Ascending aorta (tissue), 2 donors: ENCODE measurements at regions of chr1 and their contacts with region 1.

Region 1: GRCh38 chr1:6359216-6360116 is 34.1 kb downstream of the ACOT7 start:
- DNase-seq: peak; percentile 46 to 79
- H3K4me3 ChIP-seq: peak overlapping the region in 1 of 2 donors; percentile 28
- H3K27ac ChIP-seq: peak overlapping the region; percentile 81 to 83
- H3K4me1 ChIP-seq: peaks cover 14 to 23% of the 10 kb centered on the region in 2 donors
- H3K27me3 ChIP-seq: no peaks in the 10 kb centered on the region
- CTCF ChIP-seq: no peak

Region 2: DNA sequence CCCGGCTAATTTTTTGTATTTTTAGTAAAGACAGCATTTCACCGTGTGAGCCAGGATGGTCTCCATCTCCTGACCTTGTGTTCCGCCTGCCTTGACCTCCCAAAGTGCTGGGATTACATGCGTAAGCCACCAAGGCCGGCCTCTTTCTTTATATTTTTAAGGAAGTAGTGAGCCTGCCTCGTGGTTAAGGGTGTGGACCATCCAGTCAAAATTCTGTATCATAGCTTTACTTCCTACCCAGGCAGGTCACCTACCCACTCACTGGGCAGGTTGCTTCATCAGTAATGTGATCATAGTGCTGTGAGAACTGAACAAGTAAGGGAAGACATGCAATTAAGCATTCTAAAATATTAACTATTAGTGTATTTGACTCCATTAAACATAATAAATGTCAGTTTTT is 42.2 kb after region 1 on chr1:
- intact Hi-C with region 1: loop called (anchors 1 kb)
- DNase-seq: no peak
- H3K4me3 ChIP-seq: no peak overlapping the region
- H3K27ac ChIP-seq: no peak overlapping the region
- H3K4me1 ChIP-seq: no peaks in the 10 kb centered on the region
- H3K27me3 ChIP-seq: no peaks in the 10 kb centered on the region
- CTCF ChIP-seq: no peak

Region 3: DNA sequence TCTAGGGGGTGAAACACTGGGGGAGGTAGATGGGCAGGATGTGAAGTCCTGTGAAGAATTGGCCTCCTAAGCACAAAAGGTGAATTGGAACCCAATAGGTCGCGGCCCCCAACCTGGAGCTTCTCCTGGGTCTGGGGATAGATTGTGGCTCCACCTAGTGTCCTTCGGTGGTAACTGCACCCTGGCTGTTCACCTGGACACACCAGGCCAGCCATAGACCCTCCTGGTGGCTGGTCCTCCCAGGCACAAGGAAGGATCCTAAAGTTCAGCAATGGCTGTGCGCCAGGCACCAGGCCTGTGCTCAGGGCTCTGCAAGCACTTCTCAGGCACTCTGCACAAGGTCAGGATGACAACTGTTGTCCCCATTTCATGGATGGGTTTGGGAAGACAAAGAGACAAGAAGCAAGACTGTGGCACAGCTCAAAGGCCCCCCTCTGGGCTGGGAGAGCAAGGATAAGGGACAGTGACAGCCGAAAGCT is 78.6 kb after region 1 on chr1:
- intact Hi-C with region 1: loop called (anchors 1 kb)
- DNase-seq: peak in 1 of 2 donors; percentile 73
- H3K4me3 ChIP-seq: no peak overlapping the region
- H3K27ac ChIP-seq: no peak overlapping the region
- H3K4me1 ChIP-seq: no peaks in the 10 kb centered on the region
- H3K27me3 ChIP-seq: peaks cover 9% of the 10 kb centered on the region
- CTCF ChIP-seq: peak; percentile 83 to 98 (median 95)